RWPE1 (cell line): ENCODE measurements at regions of chr1 and their contacts with region 1.

Region 1: DNA sequence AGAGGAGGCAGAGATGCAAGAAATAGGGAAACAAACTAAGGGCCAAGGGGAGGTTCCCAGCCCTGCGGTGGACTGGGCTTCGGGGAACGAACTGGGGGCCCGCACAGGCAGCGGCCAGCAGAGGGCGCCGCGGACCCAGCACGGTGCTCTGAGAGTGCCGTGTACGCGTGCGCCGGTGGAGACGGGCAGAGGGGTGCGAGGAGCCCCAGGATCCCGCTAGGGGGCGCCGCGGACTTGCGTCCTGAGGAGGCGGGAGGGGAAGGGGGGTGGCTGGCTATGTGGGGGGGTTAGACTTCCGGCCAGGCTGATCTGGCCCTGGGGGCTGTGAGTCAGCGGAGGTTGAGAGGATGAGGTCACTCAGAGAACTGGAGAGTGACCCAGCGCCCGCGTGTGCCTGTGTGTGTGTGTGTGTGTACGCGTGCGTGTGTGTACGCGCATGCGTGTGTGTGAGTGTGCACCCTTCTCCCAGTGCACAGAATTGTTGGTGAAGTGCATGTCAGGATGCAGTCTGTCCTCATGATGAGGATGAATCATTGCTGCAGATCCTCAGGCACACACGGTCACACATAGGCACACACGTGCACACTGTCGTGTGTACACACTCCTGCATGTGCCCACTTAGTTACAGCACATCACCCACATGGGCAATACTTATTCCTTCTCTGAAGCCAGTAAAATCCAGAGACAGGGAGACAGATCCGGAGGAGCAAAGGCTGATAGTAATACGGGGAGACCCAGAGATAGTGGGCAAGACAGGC is 17.0 kb downstream of the NES start:
- DNase-seq: peak; percentile 99
- H3K27ac ChIP-seq: peak overlapping the region; percentile 89
- CTCF ChIP-seq: peak; percentile 99

Region 2: DNA sequence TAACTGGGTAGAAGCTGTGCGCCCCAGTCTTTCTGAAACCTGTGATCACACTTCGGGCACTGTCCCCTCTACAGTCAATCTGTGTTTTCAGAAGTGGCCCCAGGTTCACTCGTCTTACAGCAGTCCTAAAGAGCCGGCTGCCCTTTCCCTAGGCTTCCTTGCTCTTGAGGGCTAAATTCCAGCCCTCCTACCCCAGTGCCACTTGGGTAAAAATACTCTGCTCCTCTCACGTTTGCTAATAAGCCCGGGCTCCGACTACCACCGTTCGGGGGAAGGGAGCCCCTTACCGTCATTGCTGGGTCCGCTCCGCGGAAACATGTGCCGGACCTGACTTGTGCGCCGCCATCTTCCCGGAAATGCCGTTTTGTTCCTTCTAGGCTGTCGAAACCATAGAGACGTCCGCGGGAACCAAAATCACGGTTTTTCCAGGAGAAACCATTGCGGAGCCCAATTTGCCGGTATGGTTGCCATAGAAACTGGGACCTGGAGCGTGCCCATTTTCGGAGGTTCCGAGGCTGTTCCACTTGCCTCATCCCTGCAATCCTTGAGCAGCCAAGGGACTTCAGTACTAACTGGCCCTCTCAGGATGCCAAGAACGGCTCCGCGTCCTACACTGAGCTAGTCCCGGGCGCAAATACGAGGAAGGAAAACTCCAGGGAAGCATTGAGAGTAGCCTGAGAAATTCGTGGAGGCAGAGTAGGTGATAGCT is 58.9 kb before region 1 on chr1 and contains the start of gene GPATCH4:
- CTCF ChIA-PET with region 1: no interaction called
- POLR2A ChIA-PET with region 1: no interaction called
- DNase-seq: peak; percentile 76
- H3K27ac ChIP-seq: peak within 1 kb of the TSS; percentile 87
- CTCF ChIP-seq: no peak

Region 3: GRCh38 chr1:156625436-156626078 is 34.6 kb before region 1 on chr1:
- CTCF ChIA-PET with region 1: interaction called, 19 read pairs
- POLR2A ChIA-PET with region 1: no interaction called
- DNase-seq: no peak
- H3K27ac ChIP-seq: no peak overlapping the region
- CTCF ChIP-seq: peak; percentile 87

Region 4: DNA sequence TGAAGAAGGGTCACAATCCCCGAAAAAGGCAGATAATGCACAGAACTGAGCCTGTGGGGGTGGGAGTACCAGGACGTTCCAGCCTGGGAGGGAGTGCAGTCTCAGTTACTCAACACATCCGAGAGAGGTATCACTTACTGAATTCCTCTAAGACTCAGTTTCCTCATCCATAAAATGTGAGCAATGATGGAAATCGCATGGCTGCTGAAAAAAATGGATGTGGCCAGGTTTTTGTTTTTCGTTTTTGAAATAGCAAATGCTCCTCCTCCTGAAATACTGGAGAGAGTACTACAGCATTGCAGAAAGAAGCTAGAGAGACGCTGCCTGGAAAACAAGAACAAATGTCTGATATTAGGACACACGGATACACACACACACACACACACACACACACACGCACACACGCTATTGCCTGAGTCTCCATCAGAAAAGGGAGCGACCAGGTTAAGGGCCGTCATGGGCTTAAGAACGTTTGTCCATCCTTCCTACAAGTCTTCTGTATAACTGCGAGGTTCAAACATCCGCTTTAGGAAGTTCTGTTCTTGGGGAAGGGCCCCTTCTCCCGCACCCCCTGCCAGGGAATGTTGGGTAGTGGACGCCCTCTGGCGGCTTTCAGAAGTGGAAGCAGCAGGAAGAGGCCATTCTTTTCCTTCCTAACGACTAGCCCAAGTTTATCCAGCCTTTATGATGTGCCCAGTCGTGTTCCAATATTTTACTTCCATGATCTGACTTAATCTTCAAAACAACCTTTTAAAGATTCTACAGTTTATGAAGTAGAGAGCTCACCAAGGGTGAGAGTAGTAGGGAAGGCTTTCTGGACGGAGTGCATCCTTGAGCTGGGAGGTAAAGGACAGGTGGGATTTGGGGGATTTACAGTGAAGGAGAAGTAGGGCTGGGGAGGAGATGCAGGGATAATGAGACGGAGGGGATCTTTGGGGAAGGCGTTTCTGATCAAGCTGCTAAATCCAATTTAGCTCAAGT is 17.7 kb after region 1 on chr1:
- CTCF ChIA-PET with region 1: interaction called, 11 read pairs
- POLR2A ChIA-PET with region 1: no interaction called
- DNase-seq: peak; percentile 69
- H3K27ac ChIP-seq: no peak overlapping the region
- CTCF ChIP-seq: peak; percentile 88

Region 5: GRCh38 chr1:156689035-156689952 is 29.1 kb after region 1 on chr1:
- CTCF ChIA-PET with region 1: interaction called, 15 read pairs
- POLR2A ChIA-PET with region 1: no interaction called
- DNase-seq: peak; percentile 83
- H3K27ac ChIP-seq: peak overlapping the region; percentile 82
- CTCF ChIP-seq: peak; percentile 88